Activated CD4-positive, alpha-beta memory T cell treated with anti-CD3 and anti-CD28 coated beads, Interleukin-2, amount 10 ng/mL, durations not matched to agents 7 days and 5 days (primary cell): ENCODE measurements at regions of chr17 and their contacts with region 1.

Region 1: GRCh38 chr17:28937044-28937729 is 14.1 kb downstream of the PHF12 start:
- DNase-seq: no peak
- H3K4me3 Mint-ChIP-seq: no peak overlapping the region
- H3K27ac Mint-ChIP-seq: no peak overlapping the region
- H3K4me1 Mint-ChIP-seq: peaks cover 63% of the 10 kb centered on the region
- H3K27me3 Mint-ChIP-seq: no peaks in the 10 kb centered on the region

Region 2: DNA sequence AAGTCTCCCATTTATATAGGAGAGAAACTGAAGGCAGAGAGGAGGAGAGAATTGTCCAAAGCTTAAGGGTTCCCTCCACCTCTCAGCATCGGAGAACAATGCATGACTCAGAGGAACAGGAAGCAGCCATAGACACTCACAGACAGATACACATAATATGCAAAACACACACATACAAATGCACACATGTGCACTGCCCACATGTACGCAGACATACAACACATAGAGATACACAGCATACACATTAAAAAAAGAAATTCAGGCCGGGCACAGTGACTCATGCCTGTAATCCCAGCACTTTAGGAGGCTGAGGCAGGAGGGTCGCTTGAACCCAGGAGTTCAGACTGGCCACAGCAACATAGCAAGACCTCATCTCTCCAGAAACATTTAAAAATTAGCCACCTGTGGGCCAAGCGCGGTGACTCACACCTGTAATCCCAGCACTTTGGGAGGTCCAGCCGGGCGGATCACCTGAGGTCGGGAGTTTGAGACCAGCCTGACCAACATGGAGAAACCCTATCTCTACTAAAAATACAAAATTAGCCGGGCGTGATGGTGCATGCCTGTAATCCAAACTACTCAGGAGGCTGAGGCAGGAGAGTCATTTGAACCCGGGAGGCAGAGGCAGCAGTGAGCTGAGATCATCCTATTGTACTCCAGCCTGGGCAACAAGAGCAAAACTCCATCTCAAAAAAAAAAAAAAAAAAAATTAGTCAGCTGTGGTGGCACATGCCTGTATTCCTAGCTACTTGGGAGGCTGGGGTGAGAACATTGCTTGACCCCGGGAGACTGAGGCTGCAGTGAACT is 71.0 kb before region 1 on chr17:
- CTCF ChIA-PET with region 1: no interaction called
- POLR2A ChIA-PET with region 1: no interaction called
- DNase-seq: no peak
- H3K4me3 Mint-ChIP-seq: no peak overlapping the region
- H3K27ac Mint-ChIP-seq: peak overlapping the region; percentile 23
- H3K4me1 Mint-ChIP-seq: peaks cover 13% of the 10 kb centered on the region
- H3K27me3 Mint-ChIP-seq: no peaks in the 10 kb centered on the region

Region 3: DNA sequence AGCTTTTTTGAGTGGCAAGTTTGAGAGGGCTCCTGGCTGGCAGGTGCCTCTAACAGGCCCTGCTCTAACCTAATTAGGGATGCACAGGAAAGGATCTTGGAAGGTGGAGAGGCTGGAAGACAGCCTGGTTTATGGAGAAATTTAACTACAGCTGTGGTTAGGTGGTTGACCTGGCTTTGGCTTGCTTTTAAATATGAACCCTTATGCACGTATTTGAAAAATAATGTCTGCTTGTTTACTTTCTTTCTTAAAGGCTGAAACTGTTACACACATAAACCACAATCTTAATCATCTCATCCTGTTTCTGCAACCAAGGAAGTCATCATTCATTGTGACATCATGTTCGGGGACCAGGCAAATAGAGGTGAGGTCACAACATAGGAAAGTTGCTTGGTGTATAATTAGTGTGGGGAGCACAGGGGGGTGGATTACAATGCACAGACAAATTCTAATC is 11.2 kb before region 1 on chr17:
- CTCF ChIA-PET with region 1: no interaction called
- POLR2A ChIA-PET with region 1: interaction called, 13 read pairs
- DNase-seq: peak; percentile 59
- H3K4me3 Mint-ChIP-seq: peak overlapping the region; percentile 43
- H3K27ac Mint-ChIP-seq: peak overlapping the region; percentile 78
- H3K4me1 Mint-ChIP-seq: peaks cover 48% of the 10 kb centered on the region
- H3K27me3 Mint-ChIP-seq: no peaks in the 10 kb centered on the region